ENCODE measurements at regions of chr10 and their contacts with region 1.

Region 1: GRCh38 chr10:89563861-89564478 is 28.6 kb upstream of the SLC16A12 start:
- DNase-seq: peak; percentile 27
- H3K4me3 Mint-ChIP-seq: no peak overlapping the region
- H3K27ac Mint-ChIP-seq: no peak overlapping the region
- H3K4me1 Mint-ChIP-seq: no peaks in the 10 kb centered on the region
- H3K27me3 Mint-ChIP-seq: peaks cover 8% of the 10 kb centered on the region

Region 2: GRCh38 chr10:89391917-89392756 is 171.8 kb before region 1 on chr10 and contains the start of gene IFIT1:
- CTCF ChIA-PET with region 1: no interaction called
- intact Hi-C with region 1: loop called (anchors 1 kb)
- DNase-seq: peak; percentile 52
- H3K4me3 Mint-ChIP-seq: peak within 1 kb of the TSS; percentile 73
- H3K27ac Mint-ChIP-seq: peak within 1 kb of the TSS; percentile 70
- H3K4me1 Mint-ChIP-seq: peaks cover 30% of the 10 kb centered on the region
- H3K27me3 Mint-ChIP-seq: no peaks in the 10 kb centered on the region
- total RNA-seq, gene IFIT1: 5.9 to 6.0 TPM

Region 3: DNA sequence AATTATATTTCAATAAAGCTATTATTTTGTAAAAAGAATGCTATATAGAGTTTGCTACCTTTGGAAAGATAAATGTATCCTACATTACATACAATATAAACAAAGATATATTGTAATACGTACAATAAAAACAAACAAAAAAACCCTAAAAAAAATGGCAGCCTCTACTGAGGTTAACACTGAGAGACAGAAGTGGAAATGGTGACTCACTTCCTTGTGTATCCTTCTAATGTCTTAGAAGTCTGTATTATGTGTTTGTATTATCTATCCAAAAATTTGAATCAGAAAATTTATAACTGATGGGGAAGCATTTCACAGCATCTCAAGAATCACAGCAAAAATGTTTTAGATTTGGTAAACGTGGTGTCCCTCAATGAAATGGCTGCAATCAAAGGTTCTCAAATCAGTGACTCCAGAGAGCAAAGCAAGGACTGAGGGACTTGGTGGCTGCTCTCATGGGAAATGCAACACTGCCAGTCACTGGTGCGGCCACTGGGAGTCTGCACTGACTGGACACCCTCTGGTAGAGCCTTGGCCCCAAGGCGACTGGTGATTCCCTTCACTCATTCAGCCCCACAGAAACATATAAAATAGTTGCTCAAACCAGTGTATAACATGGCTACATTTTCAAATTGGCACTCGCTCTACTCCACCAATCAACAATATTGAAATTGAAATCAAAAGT is 27.3 kb after region 1 on chr10:
- CTCF ChIA-PET with region 1: no interaction called
- intact Hi-C with region 1: no loop called
- DNase-seq: no peak
- H3K4me3 Mint-ChIP-seq: no peak overlapping the region
- H3K27ac Mint-ChIP-seq: no peak overlapping the region
- H3K4me1 Mint-ChIP-seq: no peaks in the 10 kb centered on the region
- H3K27me3 Mint-ChIP-seq: no peaks in the 10 kb centered on the region

Measured in activated naive CD4-positive, alpha-beta T cell treated with anti-CD3 and anti-CD28 coated beads for 36 hours (primary cell).